ENCODE measurements at regions of chr15 and their contacts with region 1.

Region 1: GRCh38 chr15:98779463-98780071 is 131.2 kb downstream of the IGF1R start:
- DNase-seq: no peak
- H3K4me3 ChIP-seq: no peak overlapping the region
- CTCF ChIP-seq: peak; percentile 92

Region 2: GRCh38 chr15:98751819-98752218 is 27.7 kb before region 1 on chr15:
- CTCF ChIA-PET with region 1: interaction called, 12 read pairs
- POLR2A ChIA-PET with region 1: no interaction called
- DNase-seq: no peak
- H3K4me3 ChIP-seq: no peak overlapping the region
- CTCF ChIP-seq: no peak

Region 3: GRCh38 chr15:98800437-98801233 is 21.1 kb after region 1 on chr15:
- CTCF ChIA-PET with region 1: interaction called, 35 read pairs
- POLR2A ChIA-PET with region 1: no interaction called
- DNase-seq: peak; percentile 55
- H3K4me3 ChIP-seq: peak overlapping the region; percentile 39
- CTCF ChIP-seq: no peak

Region 4: GRCh38 chr15:98881526-98882520 is 102.3 kb after region 1 on chr15:
- CTCF ChIA-PET with region 1: interaction called, 14 read pairs
- POLR2A ChIA-PET with region 1: no interaction called
- DNase-seq: no peak
- H3K4me3 ChIP-seq: no peak overlapping the region
- CTCF ChIP-seq: no peak

Region 5: DNA sequence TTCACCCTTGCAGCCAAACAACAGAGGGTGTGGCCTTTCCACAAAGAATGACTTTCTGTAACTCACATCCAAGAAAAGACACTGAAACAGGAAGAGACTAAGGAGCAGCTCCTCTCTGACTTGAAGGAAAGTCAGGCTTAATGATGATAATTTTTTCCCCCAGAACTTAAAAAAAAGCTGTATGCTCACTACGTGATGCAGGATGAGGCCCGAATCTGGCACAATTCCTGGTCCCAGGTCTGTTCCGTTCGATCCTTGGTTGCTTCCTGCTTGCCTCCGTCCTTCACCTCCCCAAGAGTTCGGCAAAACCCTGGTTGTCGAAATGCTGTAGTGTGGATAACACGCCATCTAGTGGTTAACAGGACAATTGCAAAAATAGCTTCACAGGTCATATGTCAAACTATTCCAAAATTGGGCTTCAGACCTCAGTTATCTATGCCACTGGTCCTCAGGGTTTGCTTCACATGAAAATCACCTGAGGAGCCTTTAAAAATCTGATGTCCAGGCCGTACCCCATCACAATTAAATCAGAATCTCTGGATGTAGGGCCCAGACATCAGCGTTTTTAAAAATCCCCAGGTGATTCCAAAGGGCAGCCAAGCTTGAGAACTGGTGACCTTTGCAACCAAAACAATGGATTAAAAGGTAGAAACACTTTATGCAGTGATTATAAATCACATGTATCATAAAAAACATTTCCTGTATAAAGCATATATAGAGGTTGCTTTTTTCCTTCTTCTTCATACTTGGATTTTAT is 297.2 kb after region 1 on chr15:
- CTCF ChIA-PET with region 1: interaction called, 39 read pairs
- POLR2A ChIA-PET with region 1: interaction called, 3 read pairs
- DNase-seq: peak; percentile 28
- H3K4me3 ChIP-seq: peak overlapping the region; percentile 41
- CTCF ChIP-seq: peak; percentile 73